Ascending aorta (tissue), 2 donors: ENCODE measurements at regions of chr3 and their contacts with region 1.

Region 1: GRCh38 chr3:42654331-42655201 is 1.1 kb downstream of the ZBTB47 start:
- DNase-seq: peak in 1 of 2 donors; percentile 85
- H3K4me3 ChIP-seq: peak overlapping the region; percentile 85 to 98
- H3K27ac ChIP-seq: peak overlapping the region; percentile 97 to 99
- H3K4me1 ChIP-seq: peaks cover 22 to 52% of the 10 kb centered on the region in 2 donors
- H3K27me3 ChIP-seq: no peaks in the 10 kb centered on the region
- CTCF ChIP-seq: peak; percentile 7 to 34 (median 21)

Region 2: GRCh38 chr3:42518800-42519567 is 135.6 kb before region 1 on chr3:
- intact Hi-C with region 1: no loop called
- DNase-seq: no peak
- H3K4me3 ChIP-seq: no peak overlapping the region
- H3K27ac ChIP-seq: no peak overlapping the region
- H3K4me1 ChIP-seq: peaks cover 14 to 24% of the 10 kb centered on the region in 2 donors
- H3K27me3 ChIP-seq: no peaks in the 10 kb centered on the region
- CTCF ChIP-seq: no peak

Region 3: GRCh38 chr3:42581709-42582473 is 72.7 kb before region 1 on chr3 and contains the start of gene SEC22C:
- intact Hi-C with region 1: loop called (anchors 1 kb)
- DNase-seq: peak; percentile 84 to 98
- H3K4me3 ChIP-seq: peak within 1 kb of the TSS; percentile 86 to 96
- H3K27ac ChIP-seq: peak within 1 kb of the TSS; percentile 84 to 90
- H3K4me1 ChIP-seq: peaks cover 0 to 16% of the 10 kb centered on the region in 2 donors
- H3K27me3 ChIP-seq: no peaks in the 10 kb centered on the region
- CTCF ChIP-seq: peak in 2 of 3 experiments; percentile 16 to 49
- total RNA-seq, gene SEC22C: 28.3 TPM

Region 4: GRCh38 chr3:42600111-42600988 is 54.2 kb before region 1 on chr3 and contains the start of gene NKTR:
- intact Hi-C with region 1: loop called (anchors 2 kb)
- DNase-seq: peak; percentile 89 to 97
- H3K4me3 ChIP-seq: peak within 1 kb of the TSS; percentile 85 to 89
- H3K27ac ChIP-seq: peak within 1 kb of the TSS; percentile 95 to 97
- H3K4me1 ChIP-seq: peaks cover 0 to 11% of the 10 kb centered on the region in 2 donors
- H3K27me3 ChIP-seq: no peaks in the 10 kb centered on the region
- CTCF ChIP-seq: no peak
- total RNA-seq, gene NKTR: 41.7 TPM

Region 5: GRCh38 chr3:42683875-42684598 is 29.5 kb after region 1 on chr3:
- intact Hi-C with region 1: loop called (anchors 1 kb)
- DNase-seq: peak; percentile 81 to 96
- H3K4me3 ChIP-seq: no peak overlapping the region
- H3K27ac ChIP-seq: peak overlapping the region; percentile 87 to 91
- H3K4me1 ChIP-seq: peaks cover 7 to 28% of the 10 kb centered on the region in 2 donors
- H3K27me3 ChIP-seq: no peaks in the 10 kb centered on the region
- CTCF ChIP-seq: no peak

Region 6: GRCh38 chr3:42711491-42712343 is 57.2 kb after region 1 on chr3:
- intact Hi-C with region 1: no loop called
- DNase-seq: peak in 1 of 2 donors; percentile 54
- H3K4me3 ChIP-seq: no peak overlapping the region
- H3K27ac ChIP-seq: no peak overlapping the region
- H3K4me1 ChIP-seq: no peaks in the 10 kb centered on the region
- H3K27me3 ChIP-seq: no peaks in the 10 kb centered on the region
- CTCF ChIP-seq: no peak

Region 7: GRCh38 chr3:42906070-42906847 is 251.7 kb after region 1 on chr3 and contains the start of gene ZNF662:
- intact Hi-C with region 1: no loop called
- DNase-seq: peak in 1 of 2 donors; percentile 65
- H3K4me3 ChIP-seq: peak within 1 kb of the TSS; percentile 68 to 83
- H3K27ac ChIP-seq: peak within 1 kb of the TSS; percentile 33 to 66
- H3K4me1 ChIP-seq: peaks cover 0 to 10% of the 10 kb centered on the region in 2 donors
- H3K27me3 ChIP-seq: no peaks in the 10 kb centered on the region
- CTCF ChIP-seq: no peak
- total RNA-seq, gene ZNF662: 7.7 TPM